ENCODE measurements at regions of chr16 and their contacts with region 1.

Region 1: DNA sequence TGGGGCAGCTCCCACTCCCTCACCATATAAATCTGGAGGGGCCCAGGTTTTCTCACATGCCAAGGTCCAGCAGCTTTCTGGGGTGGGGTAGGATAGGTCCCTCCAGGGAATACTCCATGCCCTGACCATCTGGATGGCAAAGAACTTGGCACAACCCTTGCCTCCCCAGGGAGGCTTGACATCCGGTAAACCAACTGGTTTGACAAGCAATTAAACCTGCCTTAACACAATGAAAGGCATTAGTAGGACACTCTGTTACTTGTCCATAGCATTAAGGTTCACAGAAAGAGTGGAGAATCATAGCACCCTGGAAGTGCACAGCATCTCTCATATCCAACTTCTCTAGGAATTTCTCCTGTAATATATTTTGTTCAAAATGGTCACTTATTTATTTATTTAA is 63.9 kb upstream of the MAF start:
- DNase-seq: peak in 1 of 6 donors; percentile 7
- ATAC-seq: peak in 2 of 4 donors; percentile 22 to 25
- H3K4me3 ChIP-seq: no peak overlapping the region
- H3K27ac ChIP-seq: no peak overlapping the region
- H3K4me1 ChIP-seq: peaks cover 0 to 5% (median 0%) of the 10 kb centered on the region in 3 donors
- H3K27me3 ChIP-seq: no peaks in the 10 kb centered on the region
- CTCF ChIP-seq: no peak

Region 2: GRCh38 chr16:79571065-79571902 is 93.1 kb before region 1 on chr16:
- intact Hi-C with region 1: no loop called
- DNase-seq: no peak
- ATAC-seq: peak in 1 of 4 donors; percentile 23
- H3K4me3 ChIP-seq: no peak overlapping the region
- H3K27ac ChIP-seq: no peak overlapping the region
- H3K4me1 ChIP-seq: no peaks in the 10 kb centered on the region
- H3K27me3 ChIP-seq: no peaks in the 10 kb centered on the region
- CTCF ChIP-seq: no peak

Region 3: GRCh38 chr16:79721270-79721669 is 56.9 kb after region 1 on chr16:
- intact Hi-C with region 1: loop called in 1 of 3 experiments (anchors 10 kb)
- DNase-seq: no peak
- ATAC-seq: no peak
- H3K4me3 ChIP-seq: no peak overlapping the region
- H3K27ac ChIP-seq: no peak overlapping the region
- H3K4me1 ChIP-seq: peaks cover 0 to 8% (median 0%) of the 10 kb centered on the region in 3 donors
- H3K27me3 ChIP-seq: no peaks in the 10 kb centered on the region
- CTCF ChIP-seq: no peak